ENCODE measurements at regions of chr17 and their contacts with region 1.

Region 1: GRCh38 chr17:49715717-49716279 is 8.0 kb upstream of the SLC35B1 start:
- DNase-seq: no peak
- ATAC-seq: peak; percentile 73 to 83 (median 78)
- H3K4me3 ChIP-seq: no peak overlapping the region
- H3K27ac ChIP-seq: peak overlapping the region in 3 of 4 donors; percentile 23 to 57 (median 41)
- H3K4me1 ChIP-seq: peaks cover 10 to 18% (median 18%) of the 10 kb centered on the region in 3 donors
- H3K27me3 ChIP-seq: no peaks in the 10 kb centered on the region
- CTCF ChIP-seq: no peak

Region 2: GRCh38 chr17:49763735-49764558 is 48.1 kb after region 1 on chr17 and contains the start of gene FAM117A:
- intact Hi-C with region 1: loop called in 1 of 3 experiments (anchors 10 kb)
- DNase-seq: peak; percentile 89 to 99 (median 97)
- ATAC-seq: peak; percentile 92 to 97 (median 94)
- H3K4me3 ChIP-seq: peak within 1 kb of the TSS; percentile 53 to 76 (median 72)
- H3K27ac ChIP-seq: peak within 1 kb of the TSS; percentile 37 to 68 (median 66)
- H3K4me1 ChIP-seq: peaks cover 0 to 14% (median 4%) of the 10 kb centered on the region in 3 donors
- H3K27me3 ChIP-seq: no peaks in the 10 kb centered on the region
- CTCF ChIP-seq: no peak
- total RNA-seq, gene FAM117A: 5.5 to 14.8 (median 8.5) TPM

Measured in pancreas (tissue), 10 donors.